ENCODE measurements at regions of chr11 and their contacts with region 1.

Region 1: GRCh38 chr11:11028017-11028692 is 170.3 kb upstream of the ZBED5 start:
- DNase-seq: peak; percentile 54 to 87 (median 76)
- ATAC-seq: peak; percentile 98
- H3K4me3 ChIP-seq: no peak overlapping the region
- H3K4me3 Mint-ChIP-seq: no peak overlapping the region
- H3K27ac ChIP-seq: no peak overlapping the region
- H3K27ac Mint-ChIP-seq: no peak overlapping the region
- H3K4me1 ChIP-seq: no peaks in the 10 kb centered on the region
- H3K4me1 Mint-ChIP-seq: no peaks in the 10 kb centered on the region
- H3K27me3 ChIP-seq: no peaks in the 10 kb centered on the region
- H3K27me3 Mint-ChIP-seq: peaks cover 3% of the 10 kb centered on the region
- CTCF ChIP-seq: peak; percentile 81

Region 2: GRCh38 chr11:10263929-10264328 is 764.2 kb before region 1 on chr11:
- CTCF ChIA-PET with region 1: no interaction called
- POLR2A ChIA-PET with region 1: no interaction called
- intact Hi-C with region 1: no loop called
- DNase-seq: no peak
- ATAC-seq: no peak
- H3K4me3 ChIP-seq: no peak overlapping the region
- H3K4me3 Mint-ChIP-seq: no peak overlapping the region
- H3K27ac ChIP-seq: no peak overlapping the region
- H3K27ac Mint-ChIP-seq: no peak overlapping the region
- H3K4me1 ChIP-seq: no peaks in the 10 kb centered on the region
- H3K4me1 Mint-ChIP-seq: peaks cover 2% of the 10 kb centered on the region
- H3K27me3 ChIP-seq: no peaks in the 10 kb centered on the region
- H3K27me3 Mint-ChIP-seq: no peaks in the 10 kb centered on the region
- CTCF ChIP-seq: no peak

Region 3: GRCh38 chr11:10778217-10778970 is 249.8 kb before region 1 on chr11:
- CTCF ChIA-PET with region 1: no interaction called
- POLR2A ChIA-PET with region 1: no interaction called
- intact Hi-C with region 1: no loop called
- DNase-seq: no peak
- ATAC-seq: no peak
- H3K4me3 ChIP-seq: no peak overlapping the region
- H3K4me3 Mint-ChIP-seq: no peak overlapping the region
- H3K27ac ChIP-seq: no peak overlapping the region
- H3K27ac Mint-ChIP-seq: peak overlapping the region; percentile 14
- H3K4me1 ChIP-seq: no peaks in the 10 kb centered on the region
- H3K4me1 Mint-ChIP-seq: no peaks in the 10 kb centered on the region
- H3K27me3 ChIP-seq: no peaks in the 10 kb centered on the region
- H3K27me3 Mint-ChIP-seq: no peaks in the 10 kb centered on the region
- CTCF ChIP-seq: no peak

Region 4: GRCh38 chr11:10792398-10792975 is 235.7 kb before region 1 on chr11:
- CTCF ChIA-PET with region 1: interaction called, 114 read pairs
- POLR2A ChIA-PET with region 1: interaction called, 3 read pairs
- intact Hi-C with region 1: no loop called
- DNase-seq: peak; percentile 65 to 91 (median 85)
- ATAC-seq: peak; percentile 88
- H3K4me3 ChIP-seq: no peak overlapping the region
- H3K4me3 Mint-ChIP-seq: no peak overlapping the region
- H3K27ac ChIP-seq: no peak overlapping the region
- H3K27ac Mint-ChIP-seq: no peak overlapping the region
- H3K4me1 ChIP-seq: peaks cover 24% of the 10 kb centered on the region
- H3K4me1 Mint-ChIP-seq: peaks cover 31% of the 10 kb centered on the region
- H3K27me3 ChIP-seq: peaks cover 0 to 5% of the 10 kb centered on the region in 2 experiments
- H3K27me3 Mint-ChIP-seq: peaks cover 3% of the 10 kb centered on the region
- CTCF ChIP-seq: peak; percentile 90

Region 5: GRCh38 chr11:10885703-10886363 is 142.3 kb before region 1 on chr11:
- CTCF ChIA-PET with region 1: no interaction called
- POLR2A ChIA-PET with region 1: no interaction called
- intact Hi-C with region 1: no loop called
- DNase-seq: no peak
- ATAC-seq: no peak
- H3K4me3 ChIP-seq: no peak overlapping the region
- H3K4me3 Mint-ChIP-seq: no peak overlapping the region
- H3K27ac ChIP-seq: no peak overlapping the region
- H3K27ac Mint-ChIP-seq: no peak overlapping the region
- H3K4me1 ChIP-seq: no peaks in the 10 kb centered on the region
- H3K4me1 Mint-ChIP-seq: no peaks in the 10 kb centered on the region
- H3K27me3 ChIP-seq: no peaks in the 10 kb centered on the region
- H3K27me3 Mint-ChIP-seq: no peaks in the 10 kb centered on the region
- CTCF ChIP-seq: no peak

Region 6: DNA sequence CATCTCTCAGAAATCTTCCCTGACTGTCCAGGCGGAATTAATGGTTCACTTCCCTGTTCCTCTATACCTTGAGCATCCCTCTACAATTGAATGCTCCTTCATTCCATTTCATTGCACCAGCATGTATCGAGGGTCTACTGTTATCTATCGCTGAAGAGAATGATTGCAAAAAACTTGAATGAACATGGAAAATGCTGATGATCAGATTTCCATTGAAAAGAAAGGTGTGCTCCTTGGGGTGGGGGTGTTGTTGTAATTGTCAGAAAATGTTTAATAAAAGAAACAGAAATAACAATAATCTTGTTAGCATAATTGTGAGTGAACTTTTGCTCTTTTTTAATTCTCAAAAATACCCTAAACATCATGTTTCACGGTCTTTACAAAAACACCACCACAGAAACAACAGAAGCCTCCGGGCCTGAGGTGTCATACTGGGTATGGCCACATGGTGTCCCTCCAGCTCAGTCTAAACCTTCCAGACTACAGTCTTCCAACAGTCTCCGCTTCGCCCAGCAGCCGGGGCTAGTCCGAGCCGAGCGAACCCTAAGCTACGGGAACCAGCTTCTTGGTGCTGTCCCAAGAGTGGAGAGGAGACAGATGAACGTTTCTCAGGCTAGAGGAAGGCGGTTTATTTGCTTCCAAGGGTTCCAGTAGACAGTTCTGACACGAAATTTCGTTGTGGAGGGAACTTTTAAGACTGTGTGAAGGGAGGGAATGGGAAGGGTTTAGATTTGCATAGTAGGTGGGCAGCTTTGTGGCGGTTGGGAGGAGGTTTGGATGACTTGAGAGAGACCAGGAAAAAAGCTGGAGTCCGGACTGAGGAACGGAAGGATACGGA is 94.5 kb before region 1 on chr11:
- CTCF ChIA-PET with region 1: interaction called, 60 read pairs
- POLR2A ChIA-PET with region 1: no interaction called
- intact Hi-C with region 1: no loop called
- DNase-seq: peak; percentile 66 to 87 (median 82)
- ATAC-seq: peak; percentile 88
- H3K4me3 ChIP-seq: peak overlapping the region; percentile 50 to 53
- H3K4me3 Mint-ChIP-seq: peak overlapping the region; percentile 83
- H3K27ac ChIP-seq: no peak overlapping the region
- H3K27ac Mint-ChIP-seq: no peak overlapping the region
- H3K4me1 ChIP-seq: no peaks in the 10 kb centered on the region
- H3K4me1 Mint-ChIP-seq: peaks cover 20% of the 10 kb centered on the region
- H3K27me3 ChIP-seq: peaks cover 7 to 19% of the 10 kb centered on the region in 2 experiments
- H3K27me3 Mint-ChIP-seq: peaks cover 18% of the 10 kb centered on the region
- CTCF ChIP-seq: peak; percentile 98

Region 7: GRCh38 chr11:11141065-11141464 is 112.9 kb after region 1 on chr11:
- CTCF ChIA-PET with region 1: interaction called, 14 read pairs
- POLR2A ChIA-PET with region 1: no interaction called
- intact Hi-C with region 1: no loop called
- DNase-seq: no peak
- ATAC-seq: no peak
- H3K4me3 ChIP-seq: no peak overlapping the region
- H3K4me3 Mint-ChIP-seq: no peak overlapping the region
- H3K27ac ChIP-seq: no peak overlapping the region
- H3K27ac Mint-ChIP-seq: no peak overlapping the region
- H3K4me1 ChIP-seq: peaks cover 10% of the 10 kb centered on the region
- H3K4me1 Mint-ChIP-seq: peaks cover 13% of the 10 kb centered on the region
- H3K27me3 ChIP-seq: no peaks in the 10 kb centered on the region
- H3K27me3 Mint-ChIP-seq: no peaks in the 10 kb centered on the region
- CTCF ChIP-seq: no peak

Region 8: DNA sequence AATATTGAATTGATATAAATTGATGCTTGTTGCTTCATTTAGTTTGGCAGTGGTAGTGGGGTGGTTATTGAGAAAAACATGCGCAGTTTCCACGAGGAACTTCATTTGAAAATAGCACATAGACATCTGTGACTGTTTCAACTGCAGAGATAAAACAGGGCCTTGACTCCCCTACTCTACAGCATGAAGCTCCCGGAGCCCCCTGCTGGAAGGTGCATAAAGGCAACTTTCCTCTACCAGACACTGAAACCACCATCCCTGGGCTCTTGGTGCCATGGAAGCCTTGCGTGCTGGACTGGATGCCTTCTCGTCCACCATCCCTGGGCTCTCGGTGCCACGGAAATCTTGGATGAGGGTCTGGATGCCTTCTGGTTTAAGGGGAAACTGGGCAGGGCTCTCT is 129.0 kb after region 1 on chr11:
- CTCF ChIA-PET with region 1: interaction called, 236 read pairs
- POLR2A ChIA-PET with region 1: interaction called, 5 read pairs
- intact Hi-C with region 1: loop called (anchors 1 kb)
- DNase-seq: peak; percentile 37 to 78 (median 70)
- ATAC-seq: peak; percentile 74
- H3K4me3 ChIP-seq: no peak overlapping the region
- H3K4me3 Mint-ChIP-seq: no peak overlapping the region
- H3K27ac ChIP-seq: no peak overlapping the region
- H3K27ac Mint-ChIP-seq: peak overlapping the region; percentile 94
- H3K4me1 ChIP-seq: peaks cover 23% of the 10 kb centered on the region
- H3K4me1 Mint-ChIP-seq: peaks cover 22% of the 10 kb centered on the region
- H3K27me3 ChIP-seq: no peaks in the 10 kb centered on the region
- H3K27me3 Mint-ChIP-seq: no peaks in the 10 kb centered on the region
- CTCF ChIP-seq: peak; percentile 61

Region 9: DNA sequence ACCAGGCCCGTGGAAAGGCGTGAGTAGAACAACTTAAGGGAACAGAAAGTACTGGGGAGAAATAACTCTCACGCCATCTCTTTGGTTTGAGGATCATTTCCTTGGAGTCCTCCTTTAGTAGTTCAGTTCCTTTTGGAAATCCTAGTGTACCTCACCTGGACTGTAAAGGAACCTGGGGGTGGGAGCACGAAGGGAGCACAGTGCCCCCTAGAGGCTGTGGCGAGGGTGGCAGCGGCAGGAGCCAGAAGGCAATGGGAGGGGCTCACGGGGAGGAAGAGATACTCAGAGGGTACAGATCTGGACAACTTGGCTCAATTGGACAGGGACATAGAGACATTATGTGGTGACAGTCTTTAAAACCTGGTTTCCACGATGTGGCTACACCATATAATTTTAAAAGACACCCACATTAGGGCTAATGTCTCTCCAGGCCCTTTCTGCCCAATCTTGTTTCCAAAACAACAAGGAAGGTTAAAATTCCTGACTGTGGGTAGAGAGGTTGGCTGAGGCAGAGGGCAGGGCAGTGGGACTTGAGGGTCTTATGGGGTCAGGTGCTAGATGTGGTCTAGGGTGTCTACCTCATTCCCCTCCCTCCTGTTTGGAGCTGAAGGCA is 237.9 kb after region 1 on chr11:
- CTCF ChIA-PET with region 1: interaction called, 13 read pairs
- POLR2A ChIA-PET with region 1: no interaction called
- intact Hi-C with region 1: loop called (anchors 2 kb)
- DNase-seq: peak; percentile 24 to 63 (median 50)
- ATAC-seq: peak; percentile 63
- H3K4me3 ChIP-seq: no peak overlapping the region
- H3K4me3 Mint-ChIP-seq: no peak overlapping the region
- H3K27ac ChIP-seq: no peak overlapping the region
- H3K27ac Mint-ChIP-seq: no peak overlapping the region
- H3K4me1 ChIP-seq: no peaks in the 10 kb centered on the region
- H3K4me1 Mint-ChIP-seq: no peaks in the 10 kb centered on the region
- H3K27me3 ChIP-seq: no peaks in the 10 kb centered on the region
- H3K27me3 Mint-ChIP-seq: peaks cover 12% of the 10 kb centered on the region
- CTCF ChIP-seq: peak; percentile 45

Region 10: GRCh38 chr11:12281571-12282478 is 1253.7 kb after region 1 on chr11:
- CTCF ChIA-PET with region 1: no interaction called
- POLR2A ChIA-PET with region 1: no interaction called
- intact Hi-C with region 1: loop called in 1 of 2 experiments (anchors 5 kb)
- DNase-seq: peak; percentile 53 to 87 (median 81)
- ATAC-seq: peak; percentile 64
- H3K4me3 ChIP-seq: no peak overlapping the region
- H3K4me3 Mint-ChIP-seq: no peak overlapping the region
- H3K27ac ChIP-seq: no peak overlapping the region
- H3K27ac Mint-ChIP-seq: no peak overlapping the region
- H3K4me1 ChIP-seq: no peaks in the 10 kb centered on the region
- H3K4me1 Mint-ChIP-seq: no peaks in the 10 kb centered on the region
- H3K27me3 ChIP-seq: no peaks in the 10 kb centered on the region
- H3K27me3 Mint-ChIP-seq: no peaks in the 10 kb centered on the region
- CTCF ChIP-seq: peak; percentile 92